Left ventricle myocardium inferior (tissue), 1 donor: ENCODE measurements at regions of chr3 and their contacts with region 1.

Region 1: GRCh38 chr3:179558742-179559364 is 3.9 kb upstream of the ACTL6A start:
- DNase-seq: peak; percentile 56
- H3K4me3 ChIP-seq: no peak overlapping the region
- H3K27ac ChIP-seq: no peak overlapping the region
- H3K4me1 ChIP-seq: peaks cover 18% of the 10 kb centered on the region
- H3K27me3 ChIP-seq: no peaks in the 10 kb centered on the region
- CTCF ChIP-seq: peak; percentile 94

Region 2: GRCh38 chr3:179227349-179227748 is 331.5 kb before region 1 on chr3:
- intact Hi-C with region 1: no loop called
- DNase-seq: no peak
- H3K4me3 ChIP-seq: no peak overlapping the region
- H3K27ac ChIP-seq: no peak overlapping the region
- H3K4me1 ChIP-seq: peaks cover 4% of the 10 kb centered on the region
- H3K27me3 ChIP-seq: no peaks in the 10 kb centered on the region
- CTCF ChIP-seq: no peak

Region 3: GRCh38 chr3:179421500-179421899 is 137.4 kb before region 1 on chr3:
- intact Hi-C with region 1: loop called (anchors 5 kb)
- DNase-seq: no peak
- H3K4me3 ChIP-seq: no peak overlapping the region
- H3K27ac ChIP-seq: peak overlapping the region; percentile 59
- H3K4me1 ChIP-seq: peaks cover 19% of the 10 kb centered on the region
- H3K27me3 ChIP-seq: no peaks in the 10 kb centered on the region
- CTCF ChIP-seq: peak; percentile 81

Region 4: GRCh38 chr3:179794355-179794754 is 235.5 kb after region 1 on chr3:
- intact Hi-C with region 1: no loop called
- DNase-seq: no peak
- H3K4me3 ChIP-seq: no peak overlapping the region
- H3K27ac ChIP-seq: no peak overlapping the region
- H3K4me1 ChIP-seq: peaks cover 10% of the 10 kb centered on the region
- H3K27me3 ChIP-seq: no peaks in the 10 kb centered on the region
- CTCF ChIP-seq: no peak